Sigmoid colon (tissue), 7 donors: ENCODE measurements at regions of chr4 and their contacts with region 1.

Region 1: GRCh38 chr4:4289941-4290850 is at the starts of genes LYAR and ZBTB49:
- DNase-seq: peak; percentile 96
- H3K4me3 ChIP-seq: peak within 1 kb of the TSS; percentile 78 to 95 (median 88)
- H3K27ac ChIP-seq: peak within 1 kb of the TSS; percentile 81 to 88 (median 82)
- H3K4me1 ChIP-seq: peaks cover 0 to 32% (median 28%) of the 10 kb centered on the region in 4 donors
- H3K27me3 ChIP-seq: no peaks in the 10 kb centered on the region
- CTCF ChIP-seq: no peak
- EP300 ChIP-seq: no peak
- POLR2A ChIP-seq: peak; percentile 26 to 67
- total RNA-seq, gene LYAR: 11.4 to 18.2 (median 14.8) TPM
- total RNA-seq, gene ZBTB49: 4.1 to 6.2 (median 4.6) TPM

Region 2: GRCh38 chr4:4233610-4234009 is 56.6 kb before region 1 on chr4:
- intact Hi-C with region 1: no loop called
- DNase-seq: no peak
- H3K4me3 ChIP-seq: no peak overlapping the region
- H3K27ac ChIP-seq: no peak overlapping the region
- H3K4me1 ChIP-seq: no peaks in the 10 kb centered on the region
- H3K27me3 ChIP-seq: peaks cover 0 to 4% (median under 1%) of the 10 kb centered on the region in 3 donors
- CTCF ChIP-seq: no peak
- EP300 ChIP-seq: no peak
- POLR2A ChIP-seq: no peak

Region 3: DNA sequence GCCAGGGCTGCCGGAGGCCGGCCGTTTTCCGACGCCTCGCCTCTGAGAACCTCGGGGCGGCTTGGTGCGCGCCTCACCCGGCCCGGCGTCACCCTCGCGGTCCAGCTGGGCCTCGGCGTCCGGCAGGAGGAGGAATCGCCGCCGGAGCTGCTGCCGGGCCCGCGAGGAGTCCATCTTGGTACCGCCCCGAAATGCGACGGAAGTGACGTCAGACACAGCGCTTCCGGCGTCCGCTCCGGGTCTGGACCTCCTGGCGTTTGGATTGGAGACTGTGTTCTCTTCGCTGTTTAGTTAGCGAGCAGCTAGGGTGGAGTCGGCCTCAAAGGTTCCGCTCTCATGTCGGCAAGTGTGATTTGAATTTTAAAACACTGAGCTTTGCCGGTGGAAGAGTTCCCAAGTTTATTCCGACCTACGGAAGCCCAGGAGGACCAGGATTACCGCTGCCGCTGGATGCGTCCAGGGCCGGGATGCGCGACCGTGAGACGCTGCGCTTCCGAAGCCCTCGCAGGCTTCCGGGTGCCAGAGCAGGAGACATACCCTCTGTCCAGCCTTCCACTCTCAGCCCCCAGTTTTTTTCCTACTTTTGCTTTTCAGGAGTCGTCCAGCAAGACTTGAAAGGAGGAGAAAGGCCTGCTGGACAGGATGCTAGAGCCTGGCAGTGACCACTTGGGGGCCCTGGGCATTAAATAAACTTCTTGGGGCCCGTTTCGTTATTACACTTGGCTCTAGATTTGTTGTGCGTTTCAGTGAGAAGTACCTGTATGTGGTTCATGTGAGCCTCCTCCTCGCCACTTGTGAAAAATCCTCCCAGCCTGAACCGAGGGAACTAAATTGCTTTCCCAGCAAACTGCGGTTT is 41.9 kb before region 1 on chr4 and contains the start of gene TMEM128:
- intact Hi-C with region 1: loop called (anchors 5 kb)
- DNase-seq: peak; percentile 96
- H3K4me3 ChIP-seq: peak within 1 kb of the TSS; percentile 58 to 86 (median 73)
- H3K27ac ChIP-seq: peak within 1 kb of the TSS; percentile 90 to 92 (median 92)
- H3K4me1 ChIP-seq: peaks cover 0 to 26% (median 24%) of the 10 kb centered on the region in 4 donors
- H3K27me3 ChIP-seq: no peaks in the 10 kb centered on the region
- CTCF ChIP-seq: peak in 2 of 4 experiments; percentile 29 to 33
- EP300 ChIP-seq: peak in 1 of 4 donors; percentile 29
- POLR2A ChIP-seq: peak; percentile 71
- total RNA-seq, gene TMEM128: 11.1 to 23.5 (median 22.6) TPM

Region 4: GRCh38 chr4:4625478-4625877 is 335.3 kb after region 1 on chr4:
- intact Hi-C with region 1: no loop called
- DNase-seq: no peak
- H3K4me3 ChIP-seq: no peak overlapping the region
- H3K27ac ChIP-seq: no peak overlapping the region
- H3K4me1 ChIP-seq: no peaks in the 10 kb centered on the region
- H3K27me3 ChIP-seq: no peaks in the 10 kb centered on the region
- CTCF ChIP-seq: no peak
- EP300 ChIP-seq: no peak
- POLR2A ChIP-seq: no peak